ENCODE measurements at regions of chr4 and their contacts with region 1.

Region 1: DNA sequence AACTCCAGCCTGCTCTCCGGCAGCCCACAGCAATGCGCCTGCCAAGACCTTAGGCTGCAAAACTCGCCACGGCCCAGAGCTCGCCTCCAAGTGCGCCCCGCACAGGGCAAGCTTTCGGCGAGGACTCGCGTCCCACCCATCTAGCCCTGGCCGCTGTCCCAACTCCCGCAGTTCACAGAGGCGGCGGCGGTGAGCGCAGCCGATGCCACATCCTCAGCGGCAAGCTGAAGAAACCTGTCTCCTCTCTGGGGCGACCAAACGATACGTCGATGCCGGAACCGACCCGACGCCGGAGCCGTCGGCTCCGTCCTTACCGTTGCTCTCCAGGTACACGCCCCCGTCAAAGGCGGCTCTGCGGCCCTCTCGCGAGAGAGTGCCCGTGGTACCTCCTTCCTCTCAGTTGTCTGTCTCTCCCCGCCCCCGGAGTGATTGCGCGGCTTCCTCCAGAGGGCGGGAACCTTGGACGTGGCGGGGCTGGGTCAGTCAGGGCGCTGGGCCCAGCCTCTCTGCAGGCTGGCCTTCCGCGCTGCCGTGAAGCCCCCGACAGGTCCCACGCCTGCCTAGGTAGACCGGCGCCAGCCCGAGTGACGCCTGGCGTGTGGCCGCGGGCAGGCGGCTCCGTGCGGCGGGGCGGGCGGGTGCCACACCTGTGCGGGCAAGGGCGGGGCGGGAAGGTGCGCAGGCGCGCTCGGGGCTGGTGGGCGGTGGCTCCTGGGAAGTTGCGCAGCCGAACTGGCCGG is 380 bp upstream of the RAB33B start:
- DNase-seq: peak; percentile 92
- H3K27ac ChIP-seq: peak overlapping the region; percentile 99
- CTCF ChIP-seq: peak; percentile 21

Region 2: DNA sequence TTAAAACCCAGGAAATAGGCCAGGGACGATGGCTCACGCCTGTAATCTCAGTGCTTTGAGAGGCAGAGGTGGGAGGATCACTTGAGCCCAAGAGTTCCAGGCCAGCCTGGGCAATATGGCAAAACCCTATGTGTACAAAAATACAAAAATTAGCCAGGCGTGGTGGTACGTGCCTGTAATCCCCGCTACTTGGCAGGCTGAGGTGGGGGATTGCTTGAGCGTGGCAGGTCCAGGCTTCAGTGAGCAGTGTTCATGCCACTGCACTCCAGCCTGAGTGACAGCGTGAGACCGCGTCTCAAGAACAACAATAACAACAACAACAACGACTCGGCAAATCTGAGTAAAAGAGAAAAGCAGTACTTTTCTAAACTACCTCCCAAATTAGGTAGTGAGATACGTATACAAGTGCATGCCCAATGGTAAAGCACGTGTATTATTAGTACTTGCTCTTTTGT is 138.3 kb before region 1 on chr4:
- CTCF ChIA-PET with region 1: no interaction called
- POLR2A ChIA-PET with region 1: no interaction called
- DNase-seq: no peak
- H3K27ac ChIP-seq: peak overlapping the region; percentile 35; the same call in 1 of the 2 replicates
- CTCF ChIP-seq: no peak

Region 3: DNA sequence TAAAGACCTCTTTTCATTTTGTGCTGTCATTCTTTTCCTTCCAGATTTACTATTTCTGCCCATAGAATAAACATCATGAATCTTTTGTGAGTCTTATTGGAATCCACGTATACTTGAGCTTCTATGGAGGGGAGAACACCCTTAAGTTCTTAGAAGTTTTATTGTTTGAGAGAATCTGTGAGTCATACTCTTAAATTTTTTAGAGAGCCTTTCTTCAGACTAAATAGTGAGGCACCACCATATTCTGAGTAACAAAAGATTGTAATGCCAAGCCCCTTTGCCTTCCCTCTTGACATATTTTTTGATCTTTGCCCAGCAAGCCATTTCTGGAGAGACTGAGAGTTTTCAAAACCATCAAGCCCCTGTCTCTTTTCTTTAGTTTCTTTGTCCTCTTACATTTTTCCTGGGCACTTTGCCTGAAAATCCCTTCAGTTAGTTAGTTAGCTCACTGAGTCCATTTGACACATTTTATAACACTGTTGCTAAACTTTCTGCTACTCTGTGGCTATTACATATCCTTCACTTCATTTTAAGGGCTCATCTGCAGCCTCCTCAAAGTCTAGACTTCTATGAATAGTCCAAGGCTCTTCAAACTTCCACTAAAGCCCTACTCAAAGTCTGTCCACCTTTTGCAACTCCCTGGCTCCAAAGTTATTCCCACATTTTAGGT is 86.0 kb before region 1 on chr4:
- CTCF ChIA-PET with region 1: no interaction called
- POLR2A ChIA-PET with region 1: interaction called, 14 read pairs
- DNase-seq: no peak
- H3K27ac ChIP-seq: no peak overlapping the region
- CTCF ChIP-seq: no peak

Region 4: DNA sequence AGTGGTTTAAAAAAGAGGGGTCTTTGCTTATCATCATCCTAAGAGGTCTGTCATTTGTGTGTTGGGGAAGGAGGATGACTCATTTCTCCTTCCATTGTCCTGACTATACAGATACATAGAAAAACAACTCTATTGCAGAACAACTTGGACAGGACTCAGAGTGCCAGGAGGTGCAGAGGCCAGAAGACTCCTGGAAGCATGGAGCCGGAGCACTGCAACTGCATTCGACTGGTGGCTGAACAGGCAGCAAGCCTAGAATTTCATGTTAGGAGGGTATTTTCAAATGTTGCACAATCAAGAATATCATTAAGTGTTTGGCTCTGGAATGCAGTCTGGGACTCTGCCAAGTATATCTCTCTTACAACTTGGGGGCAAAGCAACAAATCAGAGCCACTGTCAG is 735.4 kb after region 1 on chr4:
- CTCF ChIA-PET with region 1: no interaction called
- POLR2A ChIA-PET with region 1: no interaction called
- DNase-seq: peak; percentile 17
- H3K27ac ChIP-seq: no peak overlapping the region
- CTCF ChIP-seq: no peak